Ascending aorta (tissue), 2 donors: ENCODE measurements at regions of chr19 and their contacts with region 1.

Region 1: GRCh38 chr19:34145741-34146202 is 26.5 kb upstream of the LSM14A start:
- DNase-seq: no peak
- H3K4me3 ChIP-seq: no peak overlapping the region
- H3K27ac ChIP-seq: no peak overlapping the region
- H3K4me1 ChIP-seq: no peaks in the 10 kb centered on the region
- H3K27me3 ChIP-seq: no peaks in the 10 kb centered on the region
- CTCF ChIP-seq: peak; percentile 50 to 73 (median 69)

Region 2: GRCh38 chr19:34041925-34042521 is 103.7 kb before region 1 on chr19:
- intact Hi-C with region 1: loop called (anchors 1 kb)
- DNase-seq: peak in 1 of 2 donors; percentile 83
- H3K4me3 ChIP-seq: no peak overlapping the region
- H3K27ac ChIP-seq: no peak overlapping the region
- H3K4me1 ChIP-seq: no peaks in the 10 kb centered on the region
- H3K27me3 ChIP-seq: no peaks in the 10 kb centered on the region
- CTCF ChIP-seq: peak; percentile 43 to 62 (median 54)